ENCODE measurements at regions of chr14 and their contacts with region 1.

Region 1: DNA sequence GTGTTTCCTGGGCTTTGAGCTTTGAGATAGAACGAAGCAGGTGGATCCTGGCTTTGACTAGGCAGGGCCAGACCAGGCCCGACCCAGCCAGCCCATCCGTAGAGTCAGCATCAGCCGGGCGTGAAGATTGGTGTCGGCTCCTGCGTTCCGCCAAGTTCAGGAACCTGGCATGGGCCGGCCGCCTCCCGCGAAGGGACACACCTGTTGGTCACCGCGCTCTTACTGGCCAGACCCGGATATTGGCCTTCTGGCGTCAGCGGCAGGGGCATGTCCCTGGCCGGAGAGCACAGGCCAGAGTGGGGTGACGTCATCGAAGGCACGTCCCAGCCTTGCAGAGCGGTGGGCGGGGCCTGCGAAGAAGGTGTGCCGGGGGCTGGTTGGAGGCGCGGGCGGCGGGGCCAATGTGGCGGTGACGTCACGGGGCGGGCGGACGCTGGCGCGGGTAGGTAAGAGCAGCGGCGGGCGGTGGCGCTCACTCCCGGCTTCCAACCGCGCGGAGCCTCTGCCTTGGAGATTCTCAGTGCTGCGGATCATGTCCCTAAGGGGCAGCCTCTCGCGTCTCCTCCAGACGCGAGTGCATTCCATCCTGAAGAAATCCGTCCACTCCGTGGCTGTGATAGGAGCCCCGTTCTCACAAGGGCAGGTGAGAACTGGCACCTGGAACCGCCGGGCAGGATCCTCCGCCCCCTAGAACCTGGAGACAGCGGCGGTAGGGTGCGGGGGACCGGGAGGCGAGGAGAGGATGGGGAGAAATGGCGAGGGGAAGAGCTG is at the start of gene ARG2:
- DNase-seq: peak; percentile 97 to 98
- ATAC-seq: peak; percentile 90 to 98 (median 91)
- H3K4me3 ChIP-seq: peak within 1 kb of the TSS; percentile 83
- H3K4me3 Mint-ChIP-seq: peak within 1 kb of the TSS; percentile 90
- H3K27ac ChIP-seq: peak within 1 kb of the TSS; percentile 92
- H3K27ac Mint-ChIP-seq: peak within 1 kb of the TSS; percentile 95 to 98
- H3K4me1 ChIP-seq: peaks cover 14% of the 10 kb centered on the region
- H3K4me1 Mint-ChIP-seq: peaks cover 21 to 25% of the 10 kb centered on the region in 2 donors
- H3K27me3 ChIP-seq: no peaks in the 10 kb centered on the region
- H3K27me3 Mint-ChIP-seq: peaks cover 0 to 11% of the 10 kb centered on the region in 2 donors
- CTCF ChIP-seq: no peak
- total RNA-seq, gene ARG2: 1.2 to 7.4 (median 1.4) TPM

Region 2: GRCh38 chr14:67599698-67600561 is 19.7 kb before region 1 on chr14 and contains the start of gene PIGH:
- intact Hi-C with region 1: loop called (anchors 1 kb)
- DNase-seq: peak; percentile 96
- ATAC-seq: peak; percentile 96 to 99 (median 98)
- H3K4me3 ChIP-seq: peak within 1 kb of the TSS; percentile 96
- H3K4me3 Mint-ChIP-seq: peak within 1 kb of the TSS; percentile 95
- H3K27ac ChIP-seq: peak within 1 kb of the TSS; percentile 82
- H3K27ac Mint-ChIP-seq: peak within 1 kb of the TSS; percentile 88 to 94
- H3K4me1 ChIP-seq: peaks cover 15% of the 10 kb centered on the region
- H3K4me1 Mint-ChIP-seq: peaks cover 33 to 40% of the 10 kb centered on the region in 2 donors
- H3K27me3 ChIP-seq: no peaks in the 10 kb centered on the region
- H3K27me3 Mint-ChIP-seq: peaks cover 3 to 4% of the 10 kb centered on the region in 2 donors
- CTCF ChIP-seq: peak; percentile 73
- total RNA-seq, gene PIGH: 50.9 to 56.0 (median 54.5) TPM

Region 3: DNA sequence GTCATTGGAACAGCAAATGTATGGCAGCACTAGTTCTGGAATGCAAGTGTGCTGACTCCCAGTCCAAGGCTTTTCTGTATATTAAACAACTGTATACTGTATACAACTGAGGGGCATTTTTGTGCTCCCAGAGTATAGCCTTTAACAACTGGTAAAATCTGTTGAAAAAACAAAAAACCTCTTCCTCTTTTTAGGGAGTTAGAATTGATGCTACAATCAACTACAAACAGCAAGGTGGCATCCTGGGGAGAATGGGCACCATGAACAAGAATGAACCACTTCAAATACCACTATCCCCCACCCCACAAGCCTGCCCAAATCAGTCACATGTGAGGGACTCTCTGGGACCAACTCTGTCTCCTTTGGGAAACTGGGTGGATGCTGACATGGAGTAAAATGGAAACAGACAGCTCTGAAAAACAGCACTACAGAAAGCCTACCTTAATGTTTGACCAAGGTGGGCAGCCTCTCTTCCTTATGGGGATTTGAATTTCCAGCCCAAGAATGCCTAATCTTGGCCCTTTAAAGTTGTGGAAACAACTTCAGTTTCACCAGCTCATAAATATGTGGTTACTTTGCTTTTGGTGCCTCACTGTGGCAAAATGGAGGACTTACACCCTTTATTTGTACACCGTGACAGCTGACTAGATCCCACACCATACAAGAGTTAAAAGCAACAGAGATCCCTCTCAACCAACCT is 47.3 kb after region 1 on chr14:
- intact Hi-C with region 1: loop called (anchors 1 kb)
- DNase-seq: peak in 1 of 2 donors; percentile 78
- ATAC-seq: peak; percentile 59 to 67 (median 65)
- H3K4me3 ChIP-seq: no peak overlapping the region
- H3K4me3 Mint-ChIP-seq: peak overlapping the region; percentile 35
- H3K27ac ChIP-seq: peak overlapping the region; percentile 15
- H3K27ac Mint-ChIP-seq: peak overlapping the region; percentile 85 to 86
- H3K4me1 ChIP-seq: peaks cover 23% of the 10 kb centered on the region
- H3K4me1 Mint-ChIP-seq: peaks cover 68 to 80% of the 10 kb centered on the region in 2 donors
- H3K27me3 ChIP-seq: no peaks in the 10 kb centered on the region
- H3K27me3 Mint-ChIP-seq: no peaks in the 10 kb centered on the region
- CTCF ChIP-seq: peak; percentile 65

Region 4: GRCh38 chr14:67695394-67695949 is 75.8 kb after region 1 on chr14 and contains the start of gene RDH11:
- intact Hi-C with region 1: loop called (anchors 2 kb)
- DNase-seq: peak; percentile 58 to 92
- ATAC-seq: peak; percentile 91 to 94 (median 92)
- H3K4me3 ChIP-seq: peak within 1 kb of the TSS; percentile 95
- H3K4me3 Mint-ChIP-seq: peak within 1 kb of the TSS; percentile 96
- H3K27ac ChIP-seq: peak within 1 kb of the TSS; percentile 82
- H3K27ac Mint-ChIP-seq: peak within 1 kb of the TSS; percentile 94 to 99
- H3K4me1 ChIP-seq: peaks cover 9% of the 10 kb centered on the region
- H3K4me1 Mint-ChIP-seq: peaks cover 16 to 18% of the 10 kb centered on the region in 2 donors
- H3K27me3 ChIP-seq: no peaks in the 10 kb centered on the region
- H3K27me3 Mint-ChIP-seq: no peaks in the 10 kb centered on the region
- CTCF ChIP-seq: no peak
- total RNA-seq, gene RDH11: 26.5 to 37.4 (median 33.6) TPM

Region 5: GRCh38 chr14:67816326-67817002 is 196.8 kb after region 1 on chr14 and contains the start of gene ZFYVE26:
- intact Hi-C with region 1: loop called (anchors 2 kb)
- DNase-seq: peak; percentile 81 to 95
- ATAC-seq: peak; percentile 91 to 97 (median 94)
- H3K4me3 ChIP-seq: peak within 1 kb of the TSS; percentile 63
- H3K4me3 Mint-ChIP-seq: peak within 1 kb of the TSS; percentile 98
- H3K27ac ChIP-seq: peak within 1 kb of the TSS; percentile 59
- H3K27ac Mint-ChIP-seq: peak within 1 kb of the TSS; percentile 95 to 98
- H3K4me1 ChIP-seq: peaks cover 29% of the 10 kb centered on the region
- H3K4me1 Mint-ChIP-seq: peaks cover 36 to 50% of the 10 kb centered on the region in 2 donors
- H3K27me3 ChIP-seq: no peaks in the 10 kb centered on the region
- H3K27me3 Mint-ChIP-seq: peaks cover 0 to 4% of the 10 kb centered on the region in 2 donors
- CTCF ChIP-seq: no peak
- total RNA-seq, gene ZFYVE26: 31.0 to 45.9 (median 35.5) TPM